Activated CD4-positive, alpha-beta memory T cell treated with anti-CD3 and anti-CD28 coated beads for 36 hours (primary cell): ENCODE measurements at regions of chr4 and their contacts with region 1.

Region 1: DNA sequence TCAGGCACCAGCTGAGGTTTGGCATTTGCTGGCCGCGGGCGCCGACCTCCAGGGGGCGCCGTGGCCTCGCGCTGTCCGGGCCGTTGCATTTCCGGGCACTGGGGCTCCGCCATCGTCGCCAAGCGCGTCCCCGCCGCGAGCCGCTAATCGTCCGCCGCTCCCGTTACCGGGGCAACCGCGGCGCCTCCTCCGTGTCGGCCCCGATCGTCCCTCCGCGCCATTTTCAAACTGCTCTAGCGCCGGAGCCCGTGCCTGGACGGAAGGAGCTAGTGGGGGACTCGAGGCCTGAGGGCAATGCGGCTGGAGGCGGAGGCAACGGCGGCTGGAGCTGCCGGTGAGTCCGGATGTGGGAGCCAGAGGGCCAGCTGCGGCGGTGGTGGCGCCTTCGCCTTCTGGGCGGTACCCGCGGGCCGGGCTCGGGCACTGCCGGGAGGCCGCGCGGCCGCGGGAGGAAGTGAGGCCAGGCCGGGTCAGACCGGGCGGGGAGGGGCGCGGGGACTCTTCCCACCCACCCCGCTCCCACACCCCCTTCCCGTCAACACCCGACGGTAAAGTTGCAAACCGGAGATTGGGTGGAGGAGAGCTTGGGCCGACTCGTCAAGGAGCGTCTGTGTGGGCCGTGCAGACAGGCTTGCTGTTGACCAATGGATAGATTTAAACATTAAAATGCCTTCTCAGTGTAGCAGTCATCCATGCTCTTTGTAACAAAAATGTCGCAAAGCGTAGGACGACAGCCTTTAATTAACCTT is at the start of gene CEP135:
- DNase-seq: peak; percentile 96
- H3K4me3 Mint-ChIP-seq: peak within 1 kb of the TSS; percentile 80
- H3K27ac Mint-ChIP-seq: peak within 1 kb of the TSS; percentile 91
- H3K4me1 Mint-ChIP-seq: peaks cover 35% of the 10 kb centered on the region
- H3K27me3 Mint-ChIP-seq: no peaks in the 10 kb centered on the region
- total RNA-seq, gene CEP135: 15.5 to 16.8 TPM

Region 2: GRCh38 chr4:55395529-55396307 is 553.2 kb before region 1 on chr4 and contains the start of gene TMEM165:
- CTCF ChIA-PET with region 1: interaction called, 3 read pairs
- POLR2A ChIA-PET with region 1: no interaction called
- intact Hi-C with region 1: loop called (anchors 1 kb)
- DNase-seq: peak; percentile 94
- H3K4me3 Mint-ChIP-seq: peak within 1 kb of the TSS; percentile 90
- H3K27ac Mint-ChIP-seq: peak within 1 kb of the TSS; percentile 93
- H3K4me1 Mint-ChIP-seq: peaks cover 30% of the 10 kb centered on the region
- H3K27me3 Mint-ChIP-seq: no peaks in the 10 kb centered on the region
- total RNA-seq, gene TMEM165: 50.4 to 56.8 TPM

Region 3: DNA sequence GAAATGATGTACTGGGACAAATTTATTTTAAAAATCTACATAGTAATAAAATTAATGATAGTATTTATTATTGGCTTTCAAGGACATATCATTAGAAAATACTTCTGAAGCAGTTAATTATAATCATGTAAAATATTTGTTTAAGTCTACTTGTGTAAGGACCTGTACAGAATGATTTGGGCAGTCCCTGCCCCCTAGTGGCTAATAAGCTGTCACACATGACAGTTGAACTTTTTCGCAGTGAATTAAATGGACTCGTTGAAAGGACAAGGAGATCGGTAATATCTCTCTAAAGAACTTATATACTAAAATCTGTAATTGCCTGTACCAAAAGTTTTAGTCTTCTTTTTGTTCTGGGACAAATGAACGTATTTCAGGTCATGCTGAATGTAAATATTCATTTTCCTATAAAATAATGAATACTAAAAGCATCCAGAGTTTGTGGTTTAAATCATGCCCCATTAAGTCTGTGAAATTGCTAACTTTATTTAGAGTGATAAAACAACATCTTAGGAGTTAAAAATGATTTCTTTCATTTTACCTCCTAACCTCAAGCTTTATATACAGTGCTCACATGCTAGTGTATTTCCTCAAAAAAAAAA is 81.8 kb before region 1 on chr4:
- CTCF ChIA-PET with region 1: interaction called, 17 read pairs
- POLR2A ChIA-PET with region 1: interaction called, 4 read pairs
- intact Hi-C with region 1: loop called (anchors 5 kb)
- DNase-seq: peak; percentile 33
- H3K4me3 Mint-ChIP-seq: no peak overlapping the region
- H3K27ac Mint-ChIP-seq: peak overlapping the region; percentile 46
- H3K4me1 Mint-ChIP-seq: peaks cover 21% of the 10 kb centered on the region
- H3K27me3 Mint-ChIP-seq: no peaks in the 10 kb centered on the region

Region 4: GRCh38 chr4:56048702-56049431 is 100.0 kb after region 1 on chr4:
- CTCF ChIA-PET with region 1: interaction called, 3 read pairs
- POLR2A ChIA-PET with region 1: no interaction called
- intact Hi-C with region 1: loop called (anchors 1 kb)
- DNase-seq: peak; percentile 66
- H3K4me3 Mint-ChIP-seq: peak overlapping the region; percentile 52
- H3K27ac Mint-ChIP-seq: no peak overlapping the region
- H3K4me1 Mint-ChIP-seq: peaks cover 12% of the 10 kb centered on the region
- H3K27me3 Mint-ChIP-seq: peaks cover 46% of the 10 kb centered on the region

Region 5: GRCh38 chr4:56387023-56388001 is 438.4 kb after region 1 on chr4 and contains the start of gene AASDH:
- CTCF ChIA-PET with region 1: interaction called, 16 read pairs
- POLR2A ChIA-PET with region 1: interaction called, 25 read pairs
- intact Hi-C with region 1: loop called (anchors 1 kb)
- DNase-seq: peak; percentile 97
- H3K4me3 Mint-ChIP-seq: peak within 1 kb of the TSS; percentile 93
- H3K27ac Mint-ChIP-seq: peak within 1 kb of the TSS; percentile 99
- H3K4me1 Mint-ChIP-seq: peaks cover 30% of the 10 kb centered on the region
- H3K27me3 Mint-ChIP-seq: no peaks in the 10 kb centered on the region
- total RNA-seq, gene AASDH: 12.0 to 16.6 TPM

Region 6: DNA sequence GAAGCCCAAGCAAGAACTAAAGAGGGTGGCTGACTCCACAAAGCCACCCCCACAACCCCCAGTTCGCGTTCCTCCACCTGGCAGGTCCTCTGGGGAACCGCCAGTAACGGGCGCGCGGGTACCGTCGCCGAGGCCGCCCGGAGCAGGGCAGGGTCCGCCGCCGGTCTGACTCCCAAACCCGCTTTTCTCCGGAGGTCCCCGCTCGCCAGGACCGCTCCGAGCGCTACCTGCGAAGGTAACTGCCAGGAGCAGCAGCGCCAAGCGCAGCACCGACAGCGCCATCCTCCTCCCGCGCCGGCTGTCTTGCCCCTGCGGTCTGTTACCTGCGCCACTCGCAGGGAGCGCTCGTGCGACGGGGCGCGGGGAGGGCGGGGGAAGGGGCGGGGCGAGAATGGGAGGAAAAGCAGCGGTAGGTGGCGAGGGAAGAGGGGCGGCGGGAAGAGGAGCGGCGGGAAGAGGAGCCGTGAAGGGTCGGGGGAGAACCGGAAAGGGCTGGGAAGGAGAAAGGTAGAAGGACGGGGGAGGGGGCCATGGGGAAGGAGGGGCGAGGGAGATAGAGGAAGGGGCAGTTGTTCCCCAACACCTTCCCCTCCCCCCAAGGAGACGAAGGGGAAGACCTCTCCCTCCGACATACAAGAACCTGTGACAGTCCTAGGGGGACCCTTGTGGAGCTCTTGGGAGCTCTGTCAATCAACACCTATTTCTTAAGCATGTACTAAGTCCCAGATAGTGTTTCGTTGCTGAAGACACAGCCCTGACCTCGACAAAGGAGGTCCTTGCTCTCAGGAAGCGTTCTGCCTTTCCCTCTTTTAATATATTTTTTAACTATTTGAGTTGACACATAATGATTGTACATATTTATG is 872.7 kb after region 1 on chr4 and contains the start of gene SPINK2:
- CTCF ChIA-PET with region 1: no interaction called
- POLR2A ChIA-PET with region 1: no interaction called
- intact Hi-C with region 1: loop called (anchors 10 kb)
- DNase-seq: peak; percentile 77
- H3K4me3 Mint-ChIP-seq: peak within 1 kb of the TSS; percentile 61
- H3K27ac Mint-ChIP-seq: no peak within 1 kb of the TSS
- H3K4me1 Mint-ChIP-seq: peaks cover 27% of the 10 kb centered on the region
- H3K27me3 Mint-ChIP-seq: peaks cover 12% of the 10 kb centered on the region
- total RNA-seq, gene SPINK2: 0.51 TPM in 1 of 2 experiments, not detected in the other